Right cardiac atrium (tissue), 5 donors: ENCODE measurements at regions of chr17 and their contacts with region 1.

Region 1: GRCh38 chr17:50560185-50560824 is at the start of gene CACNA1G:
- DNase-seq: peak; percentile 92 to 97 (median 96)
- ATAC-seq: peak; percentile 90 to 91
- H3K4me3 ChIP-seq: peak within 1 kb of the TSS; percentile 61
- H3K27ac ChIP-seq: no peak within 1 kb of the TSS
- H3K4me1 ChIP-seq: peaks cover 4% of the 10 kb centered on the region
- H3K27me3 ChIP-seq: no peaks in the 10 kb centered on the region
- total RNA-seq, gene CACNA1G: 4.4 to 14.8 (median 6.9) TPM

Region 2: DNA sequence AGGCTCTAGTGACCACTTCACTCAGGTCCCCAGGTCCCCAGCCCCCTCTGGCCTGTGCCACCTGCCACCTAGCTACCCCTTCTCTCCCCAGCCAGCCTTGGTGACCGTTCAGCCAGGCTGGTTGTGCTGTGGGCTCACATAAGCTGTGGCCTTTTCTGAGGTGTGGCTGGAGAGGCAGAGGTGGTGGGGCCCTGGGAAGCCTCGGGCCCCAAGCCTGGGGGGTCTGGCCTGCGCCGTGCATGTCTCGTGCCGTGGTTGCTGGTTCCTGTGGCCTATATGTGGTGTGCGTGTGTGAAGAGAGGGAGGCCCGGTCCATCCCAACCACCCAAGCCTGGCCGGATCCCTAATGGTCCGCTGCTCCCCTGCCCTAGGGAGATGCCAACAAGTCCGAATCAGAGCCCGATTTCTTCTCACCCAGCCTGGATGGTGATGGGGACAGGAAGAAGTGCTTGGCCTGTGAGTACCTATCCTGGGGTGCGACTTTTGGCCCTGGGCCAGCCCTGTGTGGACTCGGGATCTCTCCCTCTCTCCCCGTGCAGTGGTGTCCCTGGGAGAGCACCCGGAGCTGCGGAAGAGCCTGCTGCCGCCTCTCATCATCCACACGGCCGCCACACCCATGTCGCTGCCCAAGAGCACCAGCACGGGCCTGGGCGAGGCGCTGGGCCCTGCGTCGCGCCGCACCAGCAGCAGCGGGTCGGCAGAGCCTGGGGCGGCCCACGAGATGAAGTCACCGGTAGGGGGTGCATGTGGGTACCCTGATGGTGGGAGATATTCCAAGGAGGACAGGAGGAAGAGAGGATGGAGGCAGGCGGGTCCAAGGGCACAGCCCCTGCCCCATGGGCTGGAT is 36.1 kb after region 1 on chr17:
- intact Hi-C with region 1: loop called in 1 of 4 experiments (anchors 5 kb)
- DNase-seq: peak; percentile 53 to 84 (median 78)
- ATAC-seq: peak; percentile 32 to 39
- H3K4me3 ChIP-seq: no peak overlapping the region
- H3K27ac ChIP-seq: no peak overlapping the region
- H3K4me1 ChIP-seq: no peaks in the 10 kb centered on the region
- H3K27me3 ChIP-seq: no peaks in the 10 kb centered on the region

Region 3: GRCh38 chr17:50620858-50621257 is 60.6 kb after region 1 on chr17:
- intact Hi-C with region 1: loop called in 1 of 4 experiments (anchors 5 kb)
- DNase-seq: peak in 2 of 3 donors; percentile 28 to 34
- ATAC-seq: no peak
- H3K4me3 ChIP-seq: no peak overlapping the region
- H3K27ac ChIP-seq: no peak overlapping the region
- H3K4me1 ChIP-seq: no peaks in the 10 kb centered on the region
- H3K27me3 ChIP-seq: no peaks in the 10 kb centered on the region